HCT116 (cell line): ENCODE measurements at regions of chr17 and their contacts with region 1.

Region 1: GRCh38 chr17:55601874-55602364 is 90.7 kb upstream of the SMIM36 start:
- DNase-seq: peak; percentile 41
- ATAC-seq: peak; percentile 83
- H3K4me3 ChIP-seq: no peak overlapping the region
- H3K27ac ChIP-seq: no peak overlapping the region
- H3K4me1 ChIP-seq: no peaks in the 10 kb centered on the region
- H3K27me3 ChIP-seq: peaks cover 17% of the 10 kb centered on the region
- CTCF ChIP-seq: peak; percentile 71 to 80 (median 78); a peak in 5 of 6 replicates
- POLR2A ChIP-seq: no peak
- RAD21 ChIP-seq: peak; percentile 67

Region 2: GRCh38 chr17:55348749-55349354 is 253.1 kb before region 1 on chr17:
- CTCF ChIA-PET with region 1: no interaction called
- POLR2A ChIA-PET with region 1: no interaction called
- RAD21 ChIA-PET with region 1: no interaction called
- intact Hi-C with region 1: no loop called
- DNase-seq: peak; percentile 42
- ATAC-seq: peak; percentile 91
- H3K4me3 ChIP-seq: no peak overlapping the region
- H3K27ac ChIP-seq: no peak overlapping the region
- H3K4me1 ChIP-seq: no peaks in the 10 kb centered on the region
- H3K27me3 ChIP-seq: no peaks in the 10 kb centered on the region
- CTCF ChIP-seq: peak; percentile 82 to 98 (median 91)
- POLR2A ChIP-seq: no peak
- RAD21 ChIP-seq: peak; percentile 85

Region 3: GRCh38 chr17:55533608-55534007 is 68.3 kb before region 1 on chr17:
- CTCF ChIA-PET with region 1: interaction called, 52 read pairs
- POLR2A ChIA-PET with region 1: no interaction called
- RAD21 ChIA-PET with region 1: no interaction called
- intact Hi-C with region 1: no loop called
- DNase-seq: no peak
- ATAC-seq: no peak
- H3K4me3 ChIP-seq: no peak overlapping the region
- H3K27ac ChIP-seq: no peak overlapping the region
- H3K4me1 ChIP-seq: no peaks in the 10 kb centered on the region
- H3K27me3 ChIP-seq: peaks cover 23% of the 10 kb centered on the region
- CTCF ChIP-seq: no peak
- POLR2A ChIP-seq: no peak
- RAD21 ChIP-seq: no peak

Region 4: GRCh38 chr17:55549140-55549539 is 52.8 kb before region 1 on chr17:
- CTCF ChIA-PET with region 1: interaction called, 12 read pairs
- POLR2A ChIA-PET with region 1: no interaction called
- RAD21 ChIA-PET with region 1: no interaction called
- intact Hi-C with region 1: no loop called
- DNase-seq: peak; percentile 40
- ATAC-seq: peak; percentile 98
- H3K4me3 ChIP-seq: no peak overlapping the region
- H3K27ac ChIP-seq: no peak overlapping the region
- H3K4me1 ChIP-seq: no peaks in the 10 kb centered on the region
- H3K27me3 ChIP-seq: peaks cover 72% of the 10 kb centered on the region
- CTCF ChIP-seq: peak; percentile 64 to 83 (median 71)
- POLR2A ChIP-seq: no peak
- RAD21 ChIP-seq: peak; percentile 73

Region 5: DNA sequence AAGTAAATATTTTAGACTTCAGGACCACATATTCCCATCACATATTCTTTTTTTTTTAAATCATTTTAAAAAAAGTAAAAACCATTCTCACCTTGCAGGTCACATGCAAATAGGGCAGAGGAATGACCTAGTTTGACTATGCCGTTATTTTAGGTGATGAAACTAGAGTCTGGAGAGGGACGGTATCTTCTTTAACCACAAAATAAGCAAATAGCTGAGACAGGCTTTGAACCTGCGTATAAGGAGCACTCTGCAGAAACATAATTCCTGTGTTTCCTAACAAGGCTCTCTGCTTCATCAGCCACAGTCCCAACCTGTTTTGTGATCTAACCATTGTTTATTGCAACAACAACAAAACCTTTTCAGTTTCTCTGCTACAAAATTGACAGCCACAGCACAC is 270.5 kb after region 1 on chr17:
- CTCF ChIA-PET with region 1: no interaction called
- POLR2A ChIA-PET with region 1: no interaction called
- RAD21 ChIA-PET with region 1: no interaction called
- intact Hi-C with region 1: no loop called
- DNase-seq: no peak
- ATAC-seq: no peak
- H3K4me3 ChIP-seq: no peak overlapping the region
- H3K27ac ChIP-seq: no peak overlapping the region
- H3K4me1 ChIP-seq: no peaks in the 10 kb centered on the region
- H3K27me3 ChIP-seq: peaks cover 17% of the 10 kb centered on the region; the same call in 1 of the 2 replicates
- CTCF ChIP-seq: no peak
- POLR2A ChIP-seq: no peak
- RAD21 ChIP-seq: no peak